T-cell (primary cell): ENCODE measurements at regions of chr11 and their contacts with region 1.

Region 1: GRCh38 chr11:105486929-105487328 is 122.9 kb upstream of the GRIA4 start:
- DNase-seq: no peak
- ATAC-seq: no peak
- H3K4me3 ChIP-seq: no peak overlapping the region
- H3K4me3 Mint-ChIP-seq: no peak overlapping the region
- H3K27ac ChIP-seq: no peak overlapping the region
- H3K27ac Mint-ChIP-seq: no peak overlapping the region
- H3K4me1 ChIP-seq: no peaks in the 10 kb centered on the region
- H3K4me1 Mint-ChIP-seq: no peaks in the 10 kb centered on the region
- H3K27me3 ChIP-seq: peaks cover 0 to 3% of the 10 kb centered on the region in 2 experiments
- H3K27me3 Mint-ChIP-seq: peaks cover 0 to 5% of the 10 kb centered on the region in 2 donors

Region 2: DNA sequence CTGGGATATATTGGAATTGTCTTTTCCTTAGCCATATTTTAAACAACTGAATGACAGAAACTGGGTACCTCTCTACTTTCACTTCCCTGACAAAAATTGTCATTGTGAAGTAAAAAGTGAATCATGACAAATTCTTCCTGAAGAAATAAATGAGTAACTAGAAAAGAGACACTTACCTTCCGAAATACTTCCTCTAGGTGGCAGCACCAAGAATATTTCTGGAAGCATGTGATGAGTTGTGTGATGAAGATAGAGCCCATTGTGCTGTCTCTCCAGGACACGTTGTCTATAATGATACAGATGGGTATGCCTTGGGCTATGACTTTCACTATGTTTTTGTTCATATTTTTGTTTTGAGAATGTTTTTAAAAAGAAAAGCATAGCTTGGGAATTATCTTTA is 540.0 kb before region 1 on chr11:
- CTCF ChIA-PET with region 1: no interaction called
- POLR2A ChIA-PET with region 1: interaction called in 1 of 2 experiments, 15 read pairs
- DNase-seq: peak in 12 of 35 experiments; percentile 10 to 75 (median 20)
- ATAC-seq: peak; percentile 64 to 75 (median 72)
- H3K4me3 ChIP-seq: no peak overlapping the region
- H3K4me3 Mint-ChIP-seq: no peak overlapping the region
- H3K27ac ChIP-seq: no peak overlapping the region
- H3K27ac Mint-ChIP-seq: peak overlapping the region in 1 of 2 donors; percentile 81
- H3K4me1 ChIP-seq: no peaks in the 10 kb centered on the region
- H3K4me1 Mint-ChIP-seq: peaks cover 13 to 20% (median 16%) of the 10 kb centered on the region in 3 donors
- H3K27me3 ChIP-seq: no peaks in the 10 kb centered on the region
- H3K27me3 Mint-ChIP-seq: no peaks in the 10 kb centered on the region

Region 3: GRCh38 chr11:105399511-105399910 is 87.4 kb before region 1 on chr11:
- CTCF ChIA-PET with region 1: no interaction called
- POLR2A ChIA-PET with region 1: no interaction called
- DNase-seq: no peak
- ATAC-seq: no peak
- H3K4me3 ChIP-seq: no peak overlapping the region
- H3K4me3 Mint-ChIP-seq: no peak overlapping the region
- H3K27ac ChIP-seq: no peak overlapping the region
- H3K27ac Mint-ChIP-seq: no peak overlapping the region
- H3K4me1 ChIP-seq: no peaks in the 10 kb centered on the region
- H3K4me1 Mint-ChIP-seq: no peaks in the 10 kb centered on the region
- H3K27me3 ChIP-seq: no peaks in the 10 kb centered on the region
- H3K27me3 Mint-ChIP-seq: peaks cover 4 to 9% of the 10 kb centered on the region in 2 donors